Prostate gland (tissue), 2 donors: ENCODE measurements at regions of chr10 and their contacts with region 1.

Region 1: DNA sequence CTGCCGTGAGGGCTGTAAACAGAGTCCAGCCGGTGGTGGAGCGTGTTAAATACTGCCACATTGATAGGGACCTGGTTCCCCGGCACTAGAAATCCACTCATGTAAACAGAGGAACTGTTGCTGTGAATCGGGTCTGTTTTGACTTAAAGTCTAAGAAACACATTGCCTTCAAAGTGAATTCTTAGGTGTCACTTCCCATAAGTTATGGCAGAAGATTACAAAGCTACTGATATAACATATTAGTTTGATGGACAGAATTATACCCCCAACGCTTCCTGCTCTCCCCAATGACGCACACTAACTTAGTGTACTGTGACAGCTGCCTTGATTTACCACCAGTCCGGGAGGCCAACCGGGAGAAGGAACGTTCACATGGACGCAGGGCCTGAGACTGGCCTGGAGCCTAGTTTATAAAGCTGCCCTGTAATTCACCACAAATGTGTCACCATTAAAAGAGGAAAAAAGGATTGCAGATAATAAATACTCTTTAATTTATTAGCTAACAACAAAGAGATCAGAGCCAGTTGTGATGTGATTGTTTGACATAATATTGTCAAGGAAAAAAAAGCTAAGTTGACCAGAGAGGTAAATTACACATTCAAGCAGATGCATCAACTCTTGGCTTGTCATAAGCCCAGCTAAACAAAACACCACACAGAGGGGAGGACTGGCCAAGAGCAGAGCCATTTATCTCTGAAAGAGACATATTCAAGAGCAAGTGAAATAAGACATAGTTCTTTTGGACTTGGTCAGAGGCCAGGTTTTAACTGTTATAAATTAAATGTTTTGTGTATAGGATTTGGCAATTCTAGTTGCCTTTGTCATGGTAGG is 820.6 kb downstream of the LRMDA start:
- DNase-seq: peak; percentile 38
- H3K4me3 ChIP-seq: no peak overlapping the region
- H3K27ac ChIP-seq: peak overlapping the region in 1 of 2 donors; percentile 33
- H3K4me1 ChIP-seq: no peaks in the 10 kb centered on the region
- H3K27me3 ChIP-seq: no peaks in the 10 kb centered on the region
- CTCF ChIP-seq: no peak
- POLR2A ChIP-seq: no peak

Region 2: DNA sequence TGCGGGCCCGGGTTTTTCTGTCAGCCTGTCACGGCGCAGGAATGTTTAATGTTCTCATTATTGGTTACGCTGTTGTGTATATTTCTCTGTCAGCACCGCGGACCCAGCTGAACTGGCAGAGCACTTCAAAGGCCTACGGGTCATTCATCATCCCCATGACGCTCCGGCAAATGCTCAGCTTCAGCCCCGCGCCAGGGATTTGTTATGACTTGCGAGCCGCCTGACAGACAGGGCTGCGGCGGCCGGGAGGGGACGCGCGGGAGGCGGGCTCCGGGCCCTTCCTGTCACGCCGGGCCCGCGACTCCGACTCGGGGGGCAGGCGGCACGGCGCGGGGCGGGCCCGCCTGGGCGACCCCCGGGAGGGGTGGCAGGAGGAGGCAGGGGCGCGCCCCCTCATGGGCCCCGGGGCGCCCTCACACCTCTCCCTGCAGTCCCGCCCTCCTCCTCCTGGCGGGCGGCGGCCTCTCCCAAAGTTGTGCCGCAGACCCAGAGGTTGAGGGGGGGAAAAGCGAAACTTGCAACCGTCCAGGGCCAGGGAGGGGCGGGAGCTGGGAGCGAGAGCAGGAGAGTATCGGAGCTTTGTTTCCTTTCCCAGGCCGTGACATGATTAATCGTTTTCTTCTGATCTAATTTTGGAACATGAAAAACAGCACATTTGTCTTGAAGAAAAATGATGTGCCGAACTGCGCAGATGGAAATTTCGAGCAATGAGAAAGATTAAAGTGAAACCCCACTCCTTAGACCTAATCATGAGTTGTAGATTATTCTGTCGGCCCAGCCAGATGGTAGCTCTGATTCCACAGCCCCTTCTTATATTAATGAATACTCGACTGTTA is 957.0 kb before region 1 on chr10:
- intact Hi-C with region 1: loop called (anchors 10 kb)
- DNase-seq: peak; percentile 94
- H3K4me3 ChIP-seq: peak overlapping the region; percentile 53 to 69
- H3K27ac ChIP-seq: peak overlapping the region; percentile 92 to 97
- H3K4me1 ChIP-seq: peaks cover 3% of the 10 kb centered on the region
- H3K27me3 ChIP-seq: no peaks in the 10 kb centered on the region
- CTCF ChIP-seq: peak in 3 of 4 experiments; percentile 24 to 50 (median 41)
- POLR2A ChIP-seq: peak; percentile 50

Region 3: GRCh38 chr10:75772153-75772887 is 479.7 kb before region 1 on chr10:
- intact Hi-C with region 1: loop called (anchors 5 kb)
- DNase-seq: no peak
- H3K4me3 ChIP-seq: peak overlapping the region in 1 of 2 donors; percentile 16
- H3K27ac ChIP-seq: peak overlapping the region; percentile 51 to 68
- H3K4me1 ChIP-seq: peaks cover 5% of the 10 kb centered on the region
- H3K27me3 ChIP-seq: no peaks in the 10 kb centered on the region
- CTCF ChIP-seq: no peak
- POLR2A ChIP-seq: no peak

Region 4: DNA sequence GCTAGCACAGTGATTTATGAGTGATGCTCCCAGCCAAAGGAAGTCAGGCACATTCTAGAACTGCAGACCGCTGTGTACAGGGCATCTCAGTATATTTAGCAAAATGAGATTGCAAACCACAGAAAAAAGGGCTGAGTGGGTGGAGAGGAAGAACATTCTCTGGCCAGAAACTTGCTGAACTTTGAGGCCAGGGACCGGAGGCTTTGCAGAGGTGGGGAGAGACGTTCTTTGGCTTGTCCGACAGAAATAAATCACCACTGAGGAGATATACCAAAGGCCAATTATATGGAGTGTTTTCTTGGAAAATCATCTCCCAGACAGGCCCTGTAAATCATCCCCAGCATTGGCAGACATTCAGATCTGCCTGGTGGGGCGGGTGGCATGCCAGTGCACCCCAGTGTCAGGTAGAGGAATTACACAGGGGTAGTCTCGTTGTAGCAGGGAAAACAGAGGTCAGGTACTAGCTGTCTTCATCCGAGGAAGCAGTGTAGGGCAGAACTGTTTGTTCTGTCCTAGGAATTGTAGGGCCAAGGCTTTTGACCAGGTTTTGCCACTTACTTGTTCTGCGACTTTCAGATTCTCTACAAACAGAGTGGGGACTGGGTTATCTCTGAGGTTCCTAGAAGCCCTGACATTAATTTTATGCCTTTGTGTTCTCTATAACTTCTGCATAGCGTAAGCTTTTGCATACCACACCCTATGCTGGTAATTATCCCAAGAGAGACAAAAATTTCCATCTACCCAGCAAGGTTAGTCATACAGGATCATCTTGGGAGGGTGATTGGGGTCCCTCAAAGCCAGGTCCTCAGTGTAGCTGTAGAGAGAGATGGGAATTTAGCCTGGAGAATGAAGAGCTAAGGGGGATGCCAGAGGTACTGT is 165.1 kb before region 1 on chr10:
- intact Hi-C with region 1: loop called (anchors 5 kb)
- DNase-seq: peak; percentile 77
- H3K4me3 ChIP-seq: no peak overlapping the region
- H3K27ac ChIP-seq: peak overlapping the region; percentile 13 to 19
- H3K4me1 ChIP-seq: no peaks in the 10 kb centered on the region
- H3K27me3 ChIP-seq: no peaks in the 10 kb centered on the region
- CTCF ChIP-seq: peak; percentile 58 to 80 (median 68)
- POLR2A ChIP-seq: no peak

Region 5: DNA sequence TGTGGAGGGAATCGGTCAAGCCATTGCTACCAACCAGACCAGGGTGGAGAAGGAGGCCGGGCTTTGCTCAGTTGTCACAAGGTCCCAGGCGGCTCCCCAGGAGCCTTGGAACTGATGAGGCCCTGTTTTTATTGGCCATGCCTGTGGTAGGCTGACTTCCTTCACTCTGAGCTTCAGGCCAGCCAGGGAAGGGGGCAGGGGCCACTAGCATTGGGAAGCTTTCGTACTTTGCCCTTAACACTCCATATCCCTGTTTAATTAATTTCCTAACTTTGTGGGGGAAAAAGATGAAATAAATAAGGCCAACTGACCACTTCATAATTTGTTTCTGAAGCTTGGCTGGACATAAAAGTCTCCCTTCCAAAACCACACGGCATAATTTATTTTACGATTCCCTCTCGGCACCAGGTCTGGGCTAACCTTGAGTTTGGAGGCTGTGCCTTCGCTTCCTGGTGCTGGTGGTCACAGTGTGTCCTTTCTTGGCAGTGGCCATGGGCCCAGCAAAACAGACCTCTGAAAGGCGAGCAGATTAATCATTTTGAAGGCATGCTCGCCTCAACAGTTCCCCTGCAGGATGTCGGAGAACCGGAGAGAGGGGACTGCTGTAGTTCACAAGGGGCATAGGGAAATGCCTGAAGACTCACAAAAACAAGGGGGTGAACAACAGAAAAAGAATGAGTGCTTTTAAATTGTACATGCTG is 145.3 kb after region 1 on chr10:
- intact Hi-C with region 1: loop called (anchors 5 kb)
- DNase-seq: peak; percentile 13
- H3K4me3 ChIP-seq: no peak overlapping the region
- H3K27ac ChIP-seq: peak overlapping the region; percentile 44 to 59
- H3K4me1 ChIP-seq: peaks cover 7% of the 10 kb centered on the region
- H3K27me3 ChIP-seq: no peaks in the 10 kb centered on the region
- CTCF ChIP-seq: no peak
- POLR2A ChIP-seq: no peak

Region 6: GRCh38 chr10:76984559-76985443 is 732.7 kb after region 1 on chr10:
- intact Hi-C with region 1: loop called (anchors 10 kb)
- DNase-seq: peak; percentile 66
- H3K4me3 ChIP-seq: no peak overlapping the region
- H3K27ac ChIP-seq: no peak overlapping the region
- H3K4me1 ChIP-seq: no peaks in the 10 kb centered on the region
- H3K27me3 ChIP-seq: no peaks in the 10 kb centered on the region
- CTCF ChIP-seq: peak; percentile 73 to 95 (median 78)
- POLR2A ChIP-seq: no peak